ENCODE measurements at regions of chrX and their contacts with region 1.

Region 1: GRCh38 chrX:134990801-134991481 is at the start of gene SMIM10:
- DNase-seq: peak; percentile 48 to 92
- H3K4me3 ChIP-seq: no peak within 1 kb of the TSS
- CTCF ChIP-seq: no peak
- POLR2A ChIP-seq: no peak
- total RNA-seq, gene SMIM10: 0.56 to 2.7 TPM in 2 of 4 donors, not detected in the others

Region 2: GRCh38 chrX:134669378-134670098 is 321.4 kb before region 1 on chrX:
- intact Hi-C with region 1: loop called (anchors 5 kb)
- DNase-seq: peak in 1 of 2 donors; percentile 15
- H3K4me3 ChIP-seq: no peak overlapping the region
- CTCF ChIP-seq: no peak
- POLR2A ChIP-seq: no peak